Activated naive CD4-positive, alpha-beta T cell treated with anti-CD3 and anti-CD28 coated beads for 36 hours (primary cell): ENCODE measurements at regions of chr19 and their contacts with region 1.

Region 1: DNA sequence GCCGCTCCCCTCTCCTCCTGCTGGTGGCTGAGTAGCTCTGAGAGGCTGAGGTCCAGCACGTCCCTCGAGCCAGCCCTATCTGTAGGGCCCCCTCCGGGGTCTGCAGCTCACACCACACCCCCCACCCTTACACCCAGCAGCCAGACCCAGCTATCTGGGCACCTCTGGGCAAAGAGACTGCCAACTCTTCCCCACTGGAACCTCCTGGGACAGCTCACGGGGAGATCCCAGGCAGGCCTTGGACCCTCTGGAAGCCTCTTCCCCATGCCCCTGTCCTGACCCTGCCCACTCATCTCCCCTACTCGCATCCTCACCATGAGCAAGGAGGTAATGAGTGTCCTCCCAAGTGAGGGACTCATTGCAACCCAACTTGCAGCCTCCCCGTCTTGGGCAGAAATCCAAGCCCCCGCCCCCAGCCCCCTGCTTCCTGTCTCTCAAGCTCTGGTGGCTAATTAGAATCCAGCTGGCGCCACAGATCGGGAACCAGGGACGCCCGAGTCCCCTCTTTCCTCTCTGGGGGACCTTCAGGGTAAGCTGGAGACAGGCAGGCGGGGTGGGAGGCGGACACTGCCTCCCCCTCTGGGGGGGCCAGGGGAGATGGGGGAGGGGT is 22.1 kb downstream of the ADGRL1 start:
- DNase-seq: no peak
- H3K4me3 Mint-ChIP-seq: no peak overlapping the region
- H3K27ac Mint-ChIP-seq: no peak overlapping the region
- H3K4me1 Mint-ChIP-seq: no peaks in the 10 kb centered on the region
- H3K27me3 Mint-ChIP-seq: no peaks in the 10 kb centered on the region

Region 2: GRCh38 chr19:13861732-13862531 is 321.9 kb before region 1 on chr19:
- CTCF ChIA-PET with region 1: no interaction called
- intact Hi-C with region 1: no loop called
- DNase-seq: peak; percentile 93
- H3K4me3 Mint-ChIP-seq: peak overlapping the region; percentile 96
- H3K27ac Mint-ChIP-seq: peak overlapping the region; percentile 99
- H3K4me1 Mint-ChIP-seq: peaks cover 29% of the 10 kb centered on the region
- H3K27me3 Mint-ChIP-seq: peaks cover 28% of the 10 kb centered on the region

Region 3: DNA sequence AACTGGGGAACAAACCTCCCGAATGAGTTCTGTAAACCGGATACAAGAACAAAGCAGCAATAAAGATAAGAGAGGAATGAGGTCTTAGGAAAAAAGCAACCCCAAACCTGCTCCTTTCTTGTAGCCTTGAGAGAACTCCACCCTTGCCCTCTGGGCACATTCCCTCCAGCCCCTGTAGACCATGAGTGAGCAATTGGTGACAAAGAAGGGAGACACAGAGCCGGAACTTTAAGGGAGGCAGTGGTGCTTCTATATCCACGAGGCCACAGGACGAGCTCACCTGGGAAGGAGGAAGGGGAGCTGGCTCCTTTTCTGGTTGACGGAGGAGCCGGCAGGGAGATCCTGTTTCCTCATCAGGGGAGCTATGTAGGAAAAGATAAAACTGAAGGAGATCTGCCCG is 291.0 kb before region 1 on chr19:
- CTCF ChIA-PET with region 1: no interaction called
- intact Hi-C with region 1: loop called (anchors 5 kb)
- DNase-seq: no peak
- H3K4me3 Mint-ChIP-seq: no peak overlapping the region
- H3K27ac Mint-ChIP-seq: no peak overlapping the region
- H3K4me1 Mint-ChIP-seq: no peaks in the 10 kb centered on the region
- H3K27me3 Mint-ChIP-seq: no peaks in the 10 kb centered on the region